IMR-90 (cell line): ENCODE measurements at regions of chr2 and their contacts with region 1.

Region 1: DNA sequence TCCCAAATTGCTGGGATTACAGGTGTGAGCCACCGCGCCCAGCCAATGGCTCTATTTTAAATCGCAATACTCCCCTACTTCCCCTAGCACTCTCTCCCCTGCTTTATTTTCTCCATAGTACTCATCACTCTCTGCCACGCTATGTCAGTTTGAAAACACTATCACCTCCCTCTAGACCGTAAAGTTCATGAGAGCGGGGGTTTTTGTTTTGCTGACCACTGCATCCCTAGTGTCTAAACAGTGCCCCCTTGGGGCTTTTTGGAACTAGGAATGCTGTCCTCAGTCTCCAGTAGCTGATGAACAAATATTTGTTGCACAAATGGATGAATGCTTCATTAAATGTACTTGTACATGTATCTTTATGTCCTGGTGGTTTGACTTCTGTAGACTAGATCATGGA is 44.1 kb downstream of the ATOH8 start:
- DNase-seq: peak; percentile 49
- ATAC-seq: peak; percentile 18; the same call in 1 of the 2 replicates
- H3K4me3 ChIP-seq: no peak overlapping the region
- H3K27ac ChIP-seq: no peak overlapping the region
- H3K4me1 ChIP-seq: peaks cover 34% of the 10 kb centered on the region
- H3K27me3 ChIP-seq: no peaks in the 10 kb centered on the region
- CTCF ChIP-seq: peak; percentile 64
- POLR2A ChIP-seq: no peak
- RAD21 ChIP-seq: peak; percentile 52

Region 2: GRCh38 chr2:85728883-85729824 is 68.8 kb before region 1 on chr2:
- CTCF ChIA-PET with region 1: interaction called, 5 read pairs
- POLR2A ChIA-PET with region 1: no interaction called
- dilution Hi-C with region 1: no loop called
- in situ Hi-C with region 1: no loop called
- intact Hi-C with region 1: loop called (anchors 1 kb)
- DNase-seq: peak; percentile 72
- ATAC-seq: peak; percentile 98
- H3K4me3 ChIP-seq: no peak overlapping the region
- H3K27ac ChIP-seq: no peak overlapping the region
- H3K4me1 ChIP-seq: peaks cover 5% of the 10 kb centered on the region
- H3K27me3 ChIP-seq: no peaks in the 10 kb centered on the region
- CTCF ChIP-seq: peak; percentile 99
- POLR2A ChIP-seq: peak; percentile 43; the same call in 1 of the 2 replicates
- RAD21 ChIP-seq: peak; percentile 100

Region 3: DNA sequence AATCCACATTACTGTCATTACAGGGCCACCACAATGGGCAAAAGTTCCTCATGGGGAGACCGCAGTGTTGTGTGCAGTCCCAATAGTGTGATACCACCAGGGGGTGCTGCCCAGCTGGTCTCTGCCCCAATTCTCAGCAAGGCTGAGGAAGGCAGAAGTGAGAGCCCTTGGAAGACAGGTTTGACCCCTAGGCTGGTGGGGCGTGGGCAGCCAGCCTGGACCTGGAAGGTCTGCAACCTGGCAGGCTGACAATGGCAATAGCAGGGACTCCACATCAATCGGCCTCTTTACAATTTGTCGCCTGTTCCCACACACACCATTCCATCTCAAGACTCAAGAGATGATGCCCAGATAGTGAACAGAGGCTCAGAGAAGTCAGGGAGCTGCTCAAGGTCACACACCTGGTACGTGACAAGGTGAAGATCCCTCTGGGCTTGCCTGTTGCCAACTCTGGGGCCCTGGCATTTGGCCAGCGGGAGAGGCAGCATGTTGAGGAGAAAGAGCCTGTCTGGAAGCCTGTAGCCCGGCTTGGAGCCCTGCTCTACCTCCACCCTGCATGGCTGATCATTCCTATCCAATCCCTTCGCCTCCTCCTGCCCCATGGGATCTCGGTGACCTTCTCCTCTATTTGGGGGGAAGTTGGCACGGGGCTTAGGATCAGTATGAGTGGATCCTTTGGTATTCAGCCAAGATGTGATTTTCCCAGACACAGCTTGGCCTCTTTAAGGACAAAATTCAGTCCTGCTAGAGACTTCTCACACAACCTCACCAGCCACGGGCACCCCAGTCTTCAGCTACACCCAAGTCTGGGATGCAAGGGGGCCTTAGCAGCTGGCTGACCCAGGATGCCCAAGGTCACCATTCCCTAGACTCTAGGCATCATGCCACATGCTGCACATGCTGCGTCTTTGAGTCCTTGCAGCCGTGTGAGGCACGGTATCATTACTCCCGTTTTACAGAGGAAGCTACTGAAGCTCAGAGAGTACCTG is 47.0 kb before region 1 on chr2:
- CTCF ChIA-PET with region 1: no interaction called
- POLR2A ChIA-PET with region 1: no interaction called
- dilution Hi-C with region 1: no loop called
- in situ Hi-C with region 1: no loop called
- intact Hi-C with region 1: loop called (anchors 1 kb)
- DNase-seq: peak; percentile 58
- ATAC-seq: peak; percentile 51
- H3K4me3 ChIP-seq: no peak overlapping the region
- H3K27ac ChIP-seq: no peak overlapping the region
- H3K4me1 ChIP-seq: peaks cover 14% of the 10 kb centered on the region
- H3K27me3 ChIP-seq: no peaks in the 10 kb centered on the region; the same call in 1 of the 2 replicates
- CTCF ChIP-seq: peak; percentile 81
- POLR2A ChIP-seq: no peak
- RAD21 ChIP-seq: peak; percentile 84

Region 4: DNA sequence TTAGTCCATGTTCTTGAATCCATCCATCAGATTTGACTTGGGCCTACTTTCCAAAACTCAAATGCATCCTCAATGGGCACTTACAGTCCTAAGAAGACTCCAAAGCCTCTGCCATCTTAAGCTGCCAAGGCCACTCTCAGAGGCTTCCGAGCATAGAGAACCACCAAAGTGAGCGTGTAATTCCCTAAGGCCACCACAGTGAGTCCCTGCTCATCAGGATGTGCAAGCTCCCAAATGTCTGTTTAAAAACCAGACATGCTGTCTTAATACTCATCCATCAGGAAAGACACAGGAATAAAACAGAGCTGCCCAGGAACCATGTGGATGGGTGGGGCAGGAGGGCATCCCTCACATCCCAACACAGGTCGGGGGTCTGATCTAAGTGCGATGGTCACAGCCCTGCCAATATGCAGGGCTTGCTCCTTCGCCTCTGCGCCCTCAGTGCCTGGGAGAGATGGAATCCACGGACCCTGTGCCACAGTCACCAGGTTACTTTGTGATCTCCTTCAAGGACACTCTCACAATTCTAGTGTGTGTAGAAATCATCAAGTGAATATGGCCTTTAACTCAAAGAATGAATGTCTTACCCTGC is 227.4 kb after region 1 on chr2:
- CTCF ChIA-PET with region 1: no interaction called
- POLR2A ChIA-PET with region 1: no interaction called
- dilution Hi-C with region 1: no loop called
- in situ Hi-C with region 1: no loop called
- intact Hi-C with region 1: no loop called
- DNase-seq: no peak
- ATAC-seq: no peak; the same call in 1 of the 2 replicates
- H3K4me3 ChIP-seq: no peak overlapping the region
- H3K27ac ChIP-seq: no peak overlapping the region
- H3K4me1 ChIP-seq: peaks cover 7% of the 10 kb centered on the region; the same call in 1 of the 2 replicates
- H3K27me3 ChIP-seq: no peaks in the 10 kb centered on the region
- CTCF ChIP-seq: no peak
- POLR2A ChIP-seq: no peak
- RAD21 ChIP-seq: no peak